ENCODE measurements at regions of chr10 and their contacts with region 1.

Region 1: GRCh38 chr10:53846809-53847208 is 954.2 kb downstream of the PCDH15 start:
- DNase-seq: no peak
- ATAC-seq: no peak
- H3K4me3 ChIP-seq: no peak overlapping the region
- H3K27ac ChIP-seq: no peak overlapping the region
- H3K4me1 ChIP-seq: no peaks in the 10 kb centered on the region
- H3K27me3 ChIP-seq: no peaks in the 10 kb centered on the region
- CTCF ChIP-seq: no peak
- EP300 ChIP-seq: no peak
- POLR2A ChIP-seq: no peak
- RAD21 ChIP-seq: no peak

Region 2: DNA sequence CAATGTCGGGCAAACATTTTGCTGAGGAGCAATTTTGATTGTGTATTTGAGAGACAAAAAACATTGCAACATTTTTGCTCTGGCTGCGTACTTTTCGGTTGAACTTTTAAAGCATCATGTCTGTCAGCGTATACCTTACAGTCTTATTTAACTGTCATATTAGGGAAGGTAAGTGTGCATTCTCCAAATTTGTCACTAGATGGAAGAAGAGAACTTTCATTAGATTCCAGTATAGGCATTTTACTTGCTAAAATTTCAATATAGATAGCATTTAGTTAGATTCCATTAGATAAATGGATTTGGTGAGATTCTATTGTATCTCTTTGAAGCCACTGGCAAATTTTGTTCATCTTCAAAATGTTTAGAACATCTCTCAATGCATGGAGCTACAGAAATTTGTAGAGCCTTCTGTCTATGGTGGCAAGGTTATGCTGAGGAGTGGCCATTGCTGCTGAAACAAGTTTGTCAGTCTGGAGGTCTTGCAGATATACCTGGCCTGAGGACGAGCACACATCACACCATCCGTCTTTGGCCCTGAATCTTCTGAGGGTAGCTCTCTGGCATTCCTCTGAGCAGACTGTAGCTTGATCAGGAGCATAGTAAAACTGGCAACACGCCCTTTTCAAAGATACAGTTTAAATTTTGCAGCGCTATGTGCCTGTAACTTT is 636.7 kb before region 1 on chr10:
- CTCF ChIA-PET with region 1: no interaction called
- POLR2A ChIA-PET with region 1: no interaction called
- RAD21 ChIA-PET with region 1: no interaction called
- SMC1A ChIA-PET with region 1: no interaction called
- in situ Hi-C with region 1: no loop called
- intact Hi-C with region 1: loop called (anchors 5 kb)
- DNase-seq: no peak
- ATAC-seq: peak; percentile 65
- H3K4me3 ChIP-seq: no peak overlapping the region
- H3K27ac ChIP-seq: no peak overlapping the region
- H3K4me1 ChIP-seq: no peaks in the 10 kb centered on the region
- H3K27me3 ChIP-seq: no peaks in the 10 kb centered on the region
- CTCF ChIP-seq: peak in 1 of 3 experiments; percentile 42; a peak in 1 of 6 replicates
- EP300 ChIP-seq: no peak
- POLR2A ChIP-seq: no peak
- RAD21 ChIP-seq: no peak

Region 3: GRCh38 chr10:53754596-53755250 is 92.1 kb before region 1 on chr10:
- CTCF ChIA-PET with region 1: no interaction called
- POLR2A ChIA-PET with region 1: no interaction called
- RAD21 ChIA-PET with region 1: no interaction called
- SMC1A ChIA-PET with region 1: no interaction called
- in situ Hi-C with region 1: no loop called
- intact Hi-C with region 1: no loop called
- DNase-seq: no peak
- ATAC-seq: no peak
- H3K4me3 ChIP-seq: no peak overlapping the region
- H3K27ac ChIP-seq: no peak overlapping the region
- H3K4me1 ChIP-seq: no peaks in the 10 kb centered on the region
- H3K27me3 ChIP-seq: no peaks in the 10 kb centered on the region
- CTCF ChIP-seq: no peak
- EP300 ChIP-seq: no peak
- POLR2A ChIP-seq: no peak
- RAD21 ChIP-seq: no peak

Region 4: DNA sequence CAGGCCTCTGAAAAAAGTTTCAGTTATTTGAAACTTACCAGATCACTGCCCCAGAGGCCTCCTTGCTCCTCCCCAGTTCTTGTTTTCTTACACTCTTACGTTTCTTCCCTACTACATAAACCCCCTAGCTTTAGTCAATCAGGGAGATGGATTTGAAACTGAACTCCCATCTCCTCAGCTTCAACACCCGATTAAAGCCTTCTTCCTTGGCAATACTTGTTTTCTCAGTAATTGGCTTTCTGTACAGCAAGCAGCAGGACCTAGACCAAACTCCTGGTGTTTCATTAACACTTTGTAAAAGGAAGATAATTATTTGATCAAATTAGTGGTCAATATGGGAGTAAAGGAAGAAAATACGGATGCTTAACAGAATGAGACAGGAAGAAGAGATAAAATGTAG is 83.8 kb after region 1 on chr10:
- CTCF ChIA-PET with region 1: no interaction called
- POLR2A ChIA-PET with region 1: no interaction called
- RAD21 ChIA-PET with region 1: no interaction called
- SMC1A ChIA-PET with region 1: no interaction called
- in situ Hi-C with region 1: no loop called
- intact Hi-C with region 1: no loop called
- DNase-seq: no peak
- ATAC-seq: no peak
- H3K4me3 ChIP-seq: no peak overlapping the region
- H3K27ac ChIP-seq: no peak overlapping the region
- H3K4me1 ChIP-seq: no peaks in the 10 kb centered on the region
- H3K27me3 ChIP-seq: no peaks in the 10 kb centered on the region
- CTCF ChIP-seq: no peak
- EP300 ChIP-seq: no peak
- POLR2A ChIP-seq: no peak
- RAD21 ChIP-seq: no peak